Activated CD4-positive, alpha-beta T cell treated with anti-CD3 and anti-CD28 coated beads for 36 hours (primary cell): ENCODE measurements at regions of chr4 and their contacts with region 1.

Region 1: GRCh38 chr4:57200928-57201327 is 90.7 kb upstream of the IGFBP7 start:
- DNase-seq: no peak
- ATAC-seq: no peak
- H3K4me3 Mint-ChIP-seq: no peak overlapping the region
- H3K27ac Mint-ChIP-seq: no peak overlapping the region
- H3K4me1 Mint-ChIP-seq: no peaks in the 10 kb centered on the region
- H3K27me3 Mint-ChIP-seq: peaks cover 19% of the 10 kb centered on the region

Region 2: DNA sequence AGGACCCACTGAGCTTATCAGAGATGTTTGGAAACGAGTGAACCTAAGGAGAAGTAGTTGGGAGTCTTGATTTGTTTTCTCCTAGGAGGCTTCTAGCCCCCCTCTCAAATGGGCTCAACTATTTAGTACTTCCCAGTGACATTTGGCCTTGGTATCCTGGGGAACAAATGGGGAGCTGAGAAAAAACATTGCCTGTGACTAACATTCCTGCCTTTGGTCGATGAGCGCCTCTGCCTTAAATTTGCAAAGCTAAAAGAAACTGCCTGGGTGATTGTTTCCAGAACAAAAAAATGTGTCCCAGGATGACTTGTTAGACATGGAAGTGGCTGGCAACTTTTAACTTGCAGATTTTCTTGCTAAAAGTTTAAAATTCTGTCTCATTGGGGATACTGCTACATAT is 31.9 kb before region 1 on chr4:
- CTCF ChIA-PET with region 1: interaction called, 4 read pairs
- POLR2A ChIA-PET with region 1: interaction called, 12 read pairs
- intact Hi-C with region 1: no loop called
- DNase-seq: no peak
- ATAC-seq: no peak
- H3K4me3 Mint-ChIP-seq: no peak overlapping the region
- H3K27ac Mint-ChIP-seq: no peak overlapping the region
- H3K4me1 Mint-ChIP-seq: peaks cover 5% of the 10 kb centered on the region
- H3K27me3 Mint-ChIP-seq: peaks cover 15% of the 10 kb centered on the region

Region 3: DNA sequence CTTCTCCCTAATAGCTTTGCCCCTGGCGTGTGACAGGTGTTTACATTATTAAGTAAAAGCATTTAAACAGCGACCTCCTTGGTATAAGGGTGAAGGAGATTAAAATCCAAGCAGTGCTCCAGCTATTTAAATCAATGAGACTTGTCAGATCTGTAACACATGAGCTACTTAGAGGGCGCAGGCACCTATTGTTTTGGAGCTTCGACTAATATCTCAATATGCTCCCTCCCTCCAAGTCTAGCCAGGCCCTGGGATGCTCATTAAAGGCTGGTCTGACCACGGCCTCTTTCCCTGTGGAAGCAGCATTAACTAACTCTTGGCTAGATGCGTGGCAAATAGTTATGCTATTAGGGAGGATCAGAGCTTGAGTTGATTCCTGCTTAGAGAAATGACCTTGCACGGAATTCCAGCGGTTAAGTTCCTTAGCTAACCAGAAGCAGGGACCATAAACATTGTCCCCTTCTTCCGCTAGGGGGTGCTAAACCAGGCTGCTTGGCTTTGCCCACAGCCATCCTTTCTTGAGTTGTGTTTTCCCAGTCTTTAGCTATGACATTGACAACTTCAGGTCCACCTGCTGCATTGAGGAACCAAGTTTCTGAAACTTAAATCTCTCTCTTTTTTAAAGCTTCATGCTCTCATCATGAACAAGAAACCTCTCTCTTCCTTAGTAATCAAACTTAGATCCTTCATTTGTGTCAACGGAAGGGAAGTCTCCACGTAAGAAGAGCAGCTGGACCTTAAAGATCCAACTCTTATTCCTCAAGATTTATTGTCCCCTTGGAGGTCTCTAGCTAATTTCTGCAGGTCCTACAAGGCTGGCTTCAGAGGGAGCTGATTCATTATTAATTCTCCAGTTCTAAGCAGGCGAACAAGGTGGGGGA is 10.1 kb before region 1 on chr4:
- CTCF ChIA-PET with region 1: interaction called, 10 read pairs
- POLR2A ChIA-PET with region 1: no interaction called
- intact Hi-C with region 1: no loop called
- DNase-seq: peak; percentile 50
- ATAC-seq: no peak
- H3K4me3 Mint-ChIP-seq: no peak overlapping the region
- H3K27ac Mint-ChIP-seq: no peak overlapping the region
- H3K4me1 Mint-ChIP-seq: peaks cover 3% of the 10 kb centered on the region
- H3K27me3 Mint-ChIP-seq: peaks cover 17% of the 10 kb centered on the region

Region 4: DNA sequence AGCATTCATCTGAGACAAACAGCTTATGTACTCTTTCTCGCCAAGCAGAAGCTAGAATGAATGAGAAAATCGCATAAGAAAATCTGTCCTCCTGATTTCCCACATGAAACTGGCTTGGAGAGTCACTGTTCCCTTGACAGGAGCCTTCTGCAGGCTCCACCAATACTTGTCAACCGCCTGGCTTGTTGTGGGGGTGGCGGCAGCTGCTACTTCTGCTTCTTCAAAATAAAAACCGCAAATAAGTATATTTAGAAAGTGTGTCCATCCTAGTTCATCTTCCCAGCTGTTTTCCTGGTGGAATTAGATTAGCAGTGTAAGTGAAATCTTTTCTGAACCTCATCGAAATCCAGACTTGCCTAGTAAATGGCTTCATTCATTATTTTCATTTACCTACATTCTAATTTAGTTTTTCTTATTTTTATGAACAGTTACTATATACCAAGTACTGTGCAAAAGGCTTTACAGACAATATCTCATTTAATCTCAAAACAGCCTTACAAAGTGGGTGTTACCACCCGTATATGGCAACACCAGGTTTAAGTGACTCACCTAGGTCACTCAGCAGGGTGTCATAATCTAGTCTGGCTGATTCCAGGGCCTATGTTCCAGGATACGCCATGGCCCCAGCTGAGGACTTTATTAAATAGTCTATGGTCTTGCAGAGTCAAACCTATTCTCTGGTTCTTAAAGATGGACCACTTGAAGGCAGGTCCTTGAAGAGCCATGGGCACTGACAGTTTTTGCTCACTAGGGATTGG is 13.9 kb after region 1 on chr4:
- CTCF ChIA-PET with region 1: no interaction called
- POLR2A ChIA-PET with region 1: no interaction called
- intact Hi-C with region 1: no loop called
- DNase-seq: no peak
- ATAC-seq: no peak
- H3K4me3 Mint-ChIP-seq: no peak overlapping the region
- H3K27ac Mint-ChIP-seq: no peak overlapping the region
- H3K4me1 Mint-ChIP-seq: no peaks in the 10 kb centered on the region
- H3K27me3 Mint-ChIP-seq: no peaks in the 10 kb centered on the region

Region 5: GRCh38 chr4:58535581-58535980 is 1334.7 kb after region 1 on chr4:
- CTCF ChIA-PET with region 1: no interaction called
- POLR2A ChIA-PET with region 1: no interaction called
- intact Hi-C with region 1: no loop called
- DNase-seq: no peak
- ATAC-seq: no peak
- H3K4me3 Mint-ChIP-seq: no peak overlapping the region
- H3K27ac Mint-ChIP-seq: no peak overlapping the region
- H3K4me1 Mint-ChIP-seq: no peaks in the 10 kb centered on the region
- H3K27me3 Mint-ChIP-seq: no peaks in the 10 kb centered on the region